Adrenal gland (tissue), 19 donors: ENCODE measurements at regions of chr2 and their contacts with region 1.

Region 1: DNA sequence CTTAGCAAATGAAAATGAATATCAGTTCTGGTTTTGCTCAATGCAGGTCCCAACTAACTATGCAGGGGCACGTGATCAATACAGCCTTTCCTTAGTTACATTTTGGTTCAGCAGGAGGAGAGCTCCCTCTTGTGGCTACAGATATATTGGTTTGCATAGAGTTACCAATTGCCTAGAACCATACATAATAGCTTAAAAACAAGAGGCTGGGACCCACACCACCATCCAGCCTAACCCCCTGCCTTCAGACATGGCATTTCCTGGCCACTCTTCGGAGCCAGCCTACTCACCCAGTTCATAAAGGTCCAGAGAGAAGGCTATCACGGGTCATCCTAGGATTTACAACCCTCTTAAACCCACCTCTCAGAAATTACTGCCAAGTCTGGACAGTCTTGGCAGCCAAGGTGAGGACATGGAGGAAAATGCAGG is 10.5 kb downstream of the CCDC93 start:
- DNase-seq: peak; percentile 37 to 72 (median 70)
- H3K4me3 ChIP-seq: no peak overlapping the region
- H3K27ac ChIP-seq: no peak overlapping the region
- H3K4me1 ChIP-seq: peaks cover 5 to 19% of the 10 kb centered on the region in 2 donors
- H3K27me3 ChIP-seq: no peaks in the 10 kb centered on the region
- CTCF ChIP-seq: peak; percentile 80 to 92 (median 85)
- POLR2A ChIP-seq: no peak

Region 2: DNA sequence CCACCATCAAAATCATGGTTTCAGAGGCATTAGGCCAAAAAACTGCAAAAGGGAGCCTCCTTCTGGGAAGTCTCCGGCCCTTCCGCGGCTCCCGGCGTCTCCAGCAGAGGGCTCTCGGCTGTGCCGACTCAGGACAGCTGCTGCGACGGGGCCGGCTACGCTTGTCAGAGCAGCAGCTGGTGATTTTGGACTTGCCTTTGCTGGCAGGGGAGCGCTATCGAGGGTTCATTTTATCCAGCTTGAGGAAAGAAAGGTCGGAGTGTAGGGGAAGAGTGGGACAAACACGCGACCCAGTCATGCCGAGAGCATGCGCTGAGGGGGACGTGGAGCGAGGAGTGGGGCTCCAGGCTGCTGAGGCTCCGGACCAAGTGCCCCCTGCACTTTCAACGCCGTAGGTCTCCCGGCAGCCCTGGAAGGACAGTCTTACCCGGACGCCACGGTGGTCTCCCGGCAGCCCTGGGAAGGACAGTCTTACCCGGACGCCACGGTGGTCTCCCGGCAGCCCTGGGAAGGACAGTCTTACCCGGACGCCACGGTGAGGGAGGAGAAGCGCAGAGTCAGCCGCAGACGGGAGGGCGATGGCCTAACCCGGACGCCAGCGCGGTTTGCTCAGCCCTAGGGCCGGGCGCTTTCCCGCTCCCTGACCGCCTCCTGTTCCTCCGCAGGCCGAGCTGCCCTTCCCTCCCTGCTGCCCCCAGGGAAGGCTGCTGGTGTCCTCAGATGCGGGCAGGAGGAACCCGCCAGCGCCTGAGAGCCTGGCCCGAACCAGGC is 167.2 kb before region 1 on chr2:
- intact Hi-C with region 1: loop called (anchors 5 kb)
- DNase-seq: peak; percentile 84 to 93 (median 90)
- H3K4me3 ChIP-seq: peak overlapping the region in 2 of 4 donors; percentile 20 to 50
- H3K27ac ChIP-seq: peak overlapping the region in 3 of 5 donors; percentile 8 to 67 (median 32)
- H3K4me1 ChIP-seq: no peaks in the 10 kb centered on the region
- H3K27me3 ChIP-seq: no peaks in the 10 kb centered on the region
- CTCF ChIP-seq: peak; percentile 64 to 83 (median 74)
- POLR2A ChIP-seq: no peak